Ascending aorta (tissue), 2 donors: ENCODE measurements at regions of chr13 and their contacts with region 1.

Region 1: DNA sequence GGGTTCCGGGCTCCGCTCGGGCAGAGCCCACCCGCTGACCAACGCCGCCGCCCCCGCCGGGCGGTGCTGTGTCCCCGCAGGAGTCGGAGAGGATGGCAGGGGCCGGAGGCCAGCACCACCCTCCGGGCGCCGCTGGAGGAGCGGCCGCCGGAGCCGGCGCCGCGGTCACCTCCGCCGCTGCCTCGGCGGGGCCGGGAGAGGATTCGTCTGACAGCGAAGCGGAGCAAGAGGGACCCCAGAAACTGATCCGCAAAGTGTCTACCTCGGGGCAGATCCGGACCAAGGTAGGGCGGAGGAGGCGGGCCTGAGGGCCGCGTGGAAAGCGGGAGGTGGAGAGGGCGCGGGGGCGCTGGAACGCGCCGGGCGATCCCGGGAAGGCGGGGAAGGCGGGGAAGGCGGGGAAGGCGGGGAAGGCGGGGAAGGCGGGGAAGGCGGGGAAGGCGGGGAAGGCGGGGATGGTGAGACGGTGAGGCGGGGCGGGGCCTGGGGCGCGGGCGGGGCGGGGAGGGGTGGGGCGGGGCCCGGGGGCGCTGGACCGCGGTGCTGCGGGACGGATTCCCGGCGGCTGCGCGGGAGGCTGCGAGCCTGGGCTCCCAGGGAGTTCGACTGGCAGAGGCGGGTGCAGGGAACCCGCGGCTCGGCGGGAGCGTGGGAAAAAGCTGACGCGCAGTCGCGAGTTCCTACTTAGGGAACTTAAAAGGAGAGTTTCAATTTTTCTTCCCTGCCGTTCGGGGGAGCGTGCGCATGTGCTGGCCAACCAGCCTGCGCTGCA is 420 bp downstream of the DGKH start:
- DNase-seq: peak; percentile 30 to 91
- H3K4me3 ChIP-seq: peak overlapping the region; percentile 86 to 96
- H3K27ac ChIP-seq: peak overlapping the region; percentile 91 to 99
- H3K4me1 ChIP-seq: peaks cover 2 to 8% of the 10 kb centered on the region in 2 donors
- H3K27me3 ChIP-seq: no peaks in the 10 kb centered on the region
- CTCF ChIP-seq: peak in 2 of 3 experiments; percentile 27 to 30

Region 2: DNA sequence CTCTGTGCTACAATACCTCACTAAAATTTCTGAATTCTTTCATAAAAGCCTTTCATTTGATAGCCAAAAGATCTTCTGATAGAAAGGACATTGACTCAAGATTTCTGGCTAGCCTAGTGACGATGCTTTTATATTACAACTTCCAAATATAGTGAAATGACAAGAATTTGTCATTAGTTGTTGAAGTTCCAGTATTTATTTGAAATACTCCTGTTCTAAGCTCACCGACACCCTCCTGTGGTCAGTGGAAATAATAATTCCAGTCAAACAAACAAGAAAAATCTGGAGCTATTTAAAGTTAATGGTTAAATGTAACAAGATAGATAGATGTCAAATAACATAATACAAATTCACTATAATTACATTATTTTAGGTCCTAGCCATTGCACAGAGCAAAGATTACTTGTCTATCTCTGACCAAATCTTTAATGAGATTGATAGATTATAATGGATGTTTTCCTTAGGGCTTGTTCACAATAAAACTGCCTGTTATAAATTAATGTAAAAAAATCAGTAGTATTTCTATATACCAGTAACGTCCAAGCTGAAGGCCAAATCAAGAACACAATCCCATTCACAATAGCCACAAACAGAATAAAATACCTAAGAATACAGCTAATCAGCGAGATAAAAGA is 396.0 kb before region 1 on chr13:
- intact Hi-C with region 1: no loop called
- DNase-seq: no peak
- H3K4me3 ChIP-seq: no peak overlapping the region
- H3K27ac ChIP-seq: peak overlapping the region in 1 of 2 donors; percentile 40
- H3K4me1 ChIP-seq: peaks cover 0 to 14% of the 10 kb centered on the region in 2 donors
- H3K27me3 ChIP-seq: no peaks in the 10 kb centered on the region
- CTCF ChIP-seq: peak; percentile 49 to 70 (median 64)

Region 3: DNA sequence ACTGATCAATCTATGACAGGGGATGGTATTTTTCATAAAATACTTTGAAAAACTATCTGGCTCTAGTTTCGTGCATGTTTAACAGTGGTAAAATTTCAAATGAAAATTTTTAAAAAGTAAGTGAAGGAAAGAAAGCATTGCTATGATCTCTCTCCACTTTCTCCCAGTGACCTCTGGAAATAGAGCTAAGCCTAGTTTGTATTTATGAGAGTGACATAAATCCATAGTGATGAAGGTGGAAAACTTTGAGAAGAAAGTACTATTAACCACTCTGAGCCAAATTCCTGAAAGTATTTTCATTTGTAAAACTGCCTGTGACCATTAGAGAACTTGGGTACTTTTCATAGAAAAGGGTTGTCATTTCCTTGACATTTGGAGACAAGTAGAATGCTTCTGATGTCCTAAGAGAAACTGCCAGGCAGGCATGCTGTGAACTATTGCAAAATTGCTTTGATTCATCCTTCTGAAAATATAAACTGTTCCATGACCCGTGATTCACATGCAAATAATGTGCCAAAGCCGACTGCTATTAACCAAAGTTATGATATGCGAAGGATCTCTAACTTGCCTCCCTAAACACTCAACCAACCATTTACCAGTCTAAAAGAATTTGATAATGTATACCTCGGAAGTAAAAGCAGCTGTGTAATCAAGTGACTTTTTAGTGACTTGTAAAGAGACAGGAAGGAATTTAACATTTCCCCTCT is 221.2 kb before region 1 on chr13:
- intact Hi-C with region 1: loop called (anchors 5 kb)
- DNase-seq: peak in 1 of 2 donors; percentile 76
- H3K4me3 ChIP-seq: no peak overlapping the region
- H3K27ac ChIP-seq: peak overlapping the region; percentile 2 to 48
- H3K4me1 ChIP-seq: peaks cover 0 to 10% of the 10 kb centered on the region in 2 donors
- H3K27me3 ChIP-seq: no peaks in the 10 kb centered on the region
- CTCF ChIP-seq: no peak

Region 4: GRCh38 chr13:41960639-41961465 is 88.0 kb before region 1 on chr13 and contains the start of gene VWA8:
- intact Hi-C with region 1: loop called (anchors 2 kb)
- DNase-seq: peak in 1 of 2 donors; percentile 87
- H3K4me3 ChIP-seq: peak within 1 kb of the TSS; percentile 81 to 89
- H3K27ac ChIP-seq: peak within 1 kb of the TSS; percentile 85 to 91
- H3K4me1 ChIP-seq: peaks cover 0 to 10% of the 10 kb centered on the region in 2 donors
- H3K27me3 ChIP-seq: no peaks in the 10 kb centered on the region
- CTCF ChIP-seq: no peak
- total RNA-seq, gene VWA8: 10.4 TPM

Region 5: GRCh38 chr13:42110410-42111155 is 61.7 kb after region 1 on chr13:
- intact Hi-C with region 1: loop called (anchors 2 kb)
- DNase-seq: no peak
- H3K4me3 ChIP-seq: no peak overlapping the region
- H3K27ac ChIP-seq: no peak overlapping the region
- H3K4me1 ChIP-seq: peaks cover 0 to 6% of the 10 kb centered on the region in 2 donors
- H3K27me3 ChIP-seq: no peaks in the 10 kb centered on the region
- CTCF ChIP-seq: peak; percentile 65 to 79 (median 75)

Region 6: DNA sequence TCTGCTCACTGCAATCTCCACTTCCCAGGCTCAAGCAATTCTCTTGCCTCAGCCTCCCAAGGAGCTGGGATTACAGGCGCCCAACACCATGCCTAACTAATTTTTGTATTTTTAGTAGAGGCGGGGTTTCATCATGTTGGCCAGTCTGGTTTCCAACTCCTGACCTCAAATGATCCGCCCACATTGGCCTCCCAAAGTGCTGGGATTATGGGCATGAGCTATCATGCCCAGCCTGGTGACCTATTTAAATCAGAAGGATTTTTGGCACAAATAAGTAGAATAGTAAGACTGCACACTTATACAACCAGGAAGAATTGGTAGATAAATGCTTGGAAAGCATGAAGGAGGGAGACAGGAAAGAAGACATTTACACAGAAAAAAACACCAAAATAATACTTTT is 169.7 kb after region 1 on chr13:
- intact Hi-C with region 1: no loop called
- DNase-seq: no peak
- H3K4me3 ChIP-seq: no peak overlapping the region
- H3K27ac ChIP-seq: no peak overlapping the region
- H3K4me1 ChIP-seq: no peaks in the 10 kb centered on the region
- H3K27me3 ChIP-seq: no peaks in the 10 kb centered on the region
- CTCF ChIP-seq: no peak

Region 7: DNA sequence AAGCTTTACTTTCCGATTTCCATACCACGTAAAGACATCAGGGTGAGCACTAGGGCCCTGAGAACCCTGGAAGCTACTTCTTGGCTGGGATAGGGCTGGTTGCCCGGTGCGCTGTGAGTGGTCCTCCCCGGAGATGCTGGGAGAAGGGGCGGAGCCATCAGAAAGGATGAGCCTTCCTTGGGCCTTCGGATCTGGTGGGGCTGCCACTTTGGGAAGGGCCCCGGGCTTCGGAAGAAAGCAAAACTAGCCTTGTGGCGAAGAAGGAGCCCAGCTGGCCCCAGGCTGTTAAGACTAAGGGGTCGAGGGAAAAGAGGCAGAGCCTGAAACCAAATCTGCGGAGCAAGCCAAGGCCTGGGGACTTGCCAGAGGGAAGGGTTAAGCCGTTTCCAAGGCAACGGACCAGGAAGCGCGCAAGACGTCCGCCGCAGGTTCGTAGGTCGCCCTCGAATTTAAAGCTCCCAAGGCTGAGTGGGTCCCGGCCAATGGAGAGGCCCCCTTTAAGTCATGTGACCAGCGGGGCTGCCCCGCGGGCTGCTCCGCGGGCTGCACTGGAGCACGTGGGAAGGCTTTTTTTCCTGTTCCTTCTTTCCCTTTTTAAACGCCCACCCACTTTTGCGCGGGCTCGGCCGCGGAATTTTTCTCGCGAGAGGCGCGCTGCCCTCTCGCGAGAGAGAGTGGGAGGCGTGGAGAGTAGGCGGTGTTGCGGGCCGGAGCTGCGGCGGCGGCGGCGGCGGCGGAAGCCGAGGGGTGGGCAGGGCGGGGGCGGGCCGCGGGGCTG is 222.7 kb after region 1 on chr13:
- intact Hi-C with region 1: loop called (anchors 2 kb)
- DNase-seq: peak; percentile 88 to 98
- H3K4me3 ChIP-seq: peak overlapping the region; percentile 82 to 91
- H3K27ac ChIP-seq: peak overlapping the region; percentile 86 to 94
- H3K4me1 ChIP-seq: peaks cover 3 to 5% of the 10 kb centered on the region in 2 donors
- H3K27me3 ChIP-seq: no peaks in the 10 kb centered on the region
- CTCF ChIP-seq: no peak